ENCODE measurements at regions of chr6 and their contacts with region 1.

Region 1: DNA sequence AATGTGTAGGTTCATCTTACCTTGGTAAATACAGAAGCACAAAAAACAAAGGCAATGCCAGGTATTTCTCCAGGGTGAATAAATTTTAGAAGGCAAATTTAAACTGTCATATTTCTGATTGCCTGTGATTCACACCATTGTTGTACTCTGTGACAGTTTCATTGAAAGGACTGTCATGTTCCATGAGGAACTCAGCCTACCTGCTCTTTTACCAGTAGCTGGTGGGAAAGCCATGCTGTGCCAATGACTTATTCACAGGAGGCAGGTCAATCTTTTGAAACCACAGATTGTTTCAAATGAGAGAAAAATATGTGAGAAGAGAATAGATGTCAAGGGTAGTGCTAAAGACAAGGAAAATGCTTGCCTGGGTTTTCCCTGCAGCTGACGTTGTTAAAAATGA is 206.4 kb downstream of the LAMA2 start:
- DNase-seq: no peak

Region 2: GRCh38 chr6:129073691-129074395 is 15.5 kb before region 1 on chr6:
- intact Hi-C with region 1: loop called in 1 of 2 experiments (anchors 1 kb)
- DNase-seq: no peak